Aorta (tissue), 5 donors: ENCODE measurements at regions of chr17 and their contacts with region 1.

Region 1: GRCh38 chr17:40399185-40399584 is 18.5 kb downstream of the TOP2A start:
- DNase-seq: no peak
- ATAC-seq: no peak
- H3K4me3 ChIP-seq: no peak overlapping the region
- H3K27ac ChIP-seq: no peak overlapping the region
- H3K4me1 ChIP-seq: no peaks in the 10 kb centered on the region
- H3K27me3 ChIP-seq: no peaks in the 10 kb centered on the region

Region 2: GRCh38 chr17:40209404-40210093 is 189.6 kb before region 1 on chr17:
- intact Hi-C with region 1: no loop called
- DNase-seq: no peak
- ATAC-seq: no peak
- H3K4me3 ChIP-seq: no peak overlapping the region
- H3K27ac ChIP-seq: no peak overlapping the region
- H3K4me1 ChIP-seq: no peaks in the 10 kb centered on the region
- H3K27me3 ChIP-seq: no peaks in the 10 kb centered on the region

Region 3: DNA sequence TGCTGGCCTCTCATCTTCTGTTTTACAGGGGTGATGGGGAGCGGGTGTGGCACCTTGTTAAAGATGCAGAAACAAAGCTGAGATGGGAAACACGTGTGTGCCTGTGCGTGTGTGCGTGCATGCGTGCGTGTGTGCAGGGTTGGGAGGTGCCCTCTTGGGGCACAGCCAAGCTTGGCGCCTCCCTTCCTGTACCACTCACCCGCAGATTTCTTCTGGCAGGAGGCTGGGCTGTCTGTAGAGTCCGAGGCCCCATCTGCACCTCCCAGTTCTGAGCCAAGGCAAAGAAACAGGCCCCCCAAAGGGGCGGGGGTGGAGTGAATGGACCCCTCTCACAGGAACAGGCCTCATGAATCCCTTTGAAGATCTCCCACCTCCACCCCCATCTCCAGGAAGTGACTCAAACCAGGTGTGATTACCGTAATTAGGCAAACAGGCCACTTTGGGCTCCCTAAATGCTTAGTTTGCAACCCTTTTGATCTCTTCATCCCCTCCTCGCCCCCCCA is 81.4 kb after region 1 on chr17:
- intact Hi-C with region 1: loop called in 1 of 2 experiments (anchors 10 kb)
- DNase-seq: no peak
- ATAC-seq: no peak
- H3K4me3 ChIP-seq: no peak overlapping the region
- H3K27ac ChIP-seq: no peak overlapping the region
- H3K4me1 ChIP-seq: no peaks in the 10 kb centered on the region
- H3K27me3 ChIP-seq: no peaks in the 10 kb centered on the region

Region 4: GRCh38 chr17:40531051-40531991 is 132.1 kb after region 1 on chr17:
- intact Hi-C with region 1: loop called (anchors 5 to 10 kb)
- DNase-seq: peak in 1 of 2 donors; percentile 54
- ATAC-seq: no peak
- H3K4me3 ChIP-seq: no peak overlapping the region
- H3K27ac ChIP-seq: no peak overlapping the region
- H3K4me1 ChIP-seq: no peaks in the 10 kb centered on the region
- H3K27me3 ChIP-seq: no peaks in the 10 kb centered on the region

Region 5: DNA sequence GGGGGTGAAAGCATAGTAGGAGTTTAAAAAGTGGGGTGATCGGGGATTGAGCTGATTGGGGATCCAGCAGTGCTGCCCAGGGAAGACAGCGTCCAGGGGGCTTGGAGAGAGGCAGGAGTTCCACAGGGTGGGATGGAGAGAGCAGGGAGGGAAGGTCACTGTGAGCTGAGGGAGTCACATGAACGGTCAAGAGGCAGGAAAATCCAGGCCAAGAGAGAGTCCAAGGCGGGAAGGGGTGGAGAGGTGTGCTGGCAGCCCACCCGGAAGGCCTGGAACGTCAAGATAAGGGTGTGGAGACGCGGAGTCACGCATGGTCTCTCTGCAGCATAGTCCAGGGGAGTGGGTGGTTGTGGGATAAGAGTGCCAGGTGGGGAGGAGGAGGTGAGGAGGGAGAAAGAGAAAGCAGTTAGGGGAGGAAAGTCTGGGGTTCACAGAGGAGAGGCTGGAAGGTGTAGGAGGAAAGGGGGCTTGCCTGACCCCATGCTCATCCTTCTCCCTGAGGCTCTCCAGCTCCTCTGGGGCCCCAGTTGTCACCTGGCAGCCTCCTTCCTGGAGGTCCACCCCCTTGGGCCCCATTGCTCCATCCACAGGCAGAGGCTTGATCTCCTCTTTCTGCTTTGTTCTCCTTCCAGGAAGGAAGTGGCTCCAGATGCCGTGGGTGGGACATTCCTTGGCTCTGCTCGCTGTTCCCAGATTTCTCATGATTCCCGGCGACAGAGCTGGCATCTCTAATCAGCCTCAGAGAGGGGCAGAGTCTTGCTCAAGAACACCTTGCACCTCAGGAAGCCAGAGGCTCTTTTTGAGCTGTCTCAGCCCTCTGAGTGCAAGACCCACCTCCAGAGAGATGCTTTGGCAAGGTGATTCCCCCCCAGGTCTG is 137.3 kb after region 1 on chr17:
- intact Hi-C with region 1: loop called (anchors 5 to 10 kb)
- DNase-seq: peak; percentile 61 to 83
- ATAC-seq: peak; percentile 46
- H3K4me3 ChIP-seq: no peak overlapping the region
- H3K27ac ChIP-seq: no peak overlapping the region
- H3K4me1 ChIP-seq: peaks cover 0 to 2% of the 10 kb centered on the region in 2 donors
- H3K27me3 ChIP-seq: no peaks in the 10 kb centered on the region

Region 6: DNA sequence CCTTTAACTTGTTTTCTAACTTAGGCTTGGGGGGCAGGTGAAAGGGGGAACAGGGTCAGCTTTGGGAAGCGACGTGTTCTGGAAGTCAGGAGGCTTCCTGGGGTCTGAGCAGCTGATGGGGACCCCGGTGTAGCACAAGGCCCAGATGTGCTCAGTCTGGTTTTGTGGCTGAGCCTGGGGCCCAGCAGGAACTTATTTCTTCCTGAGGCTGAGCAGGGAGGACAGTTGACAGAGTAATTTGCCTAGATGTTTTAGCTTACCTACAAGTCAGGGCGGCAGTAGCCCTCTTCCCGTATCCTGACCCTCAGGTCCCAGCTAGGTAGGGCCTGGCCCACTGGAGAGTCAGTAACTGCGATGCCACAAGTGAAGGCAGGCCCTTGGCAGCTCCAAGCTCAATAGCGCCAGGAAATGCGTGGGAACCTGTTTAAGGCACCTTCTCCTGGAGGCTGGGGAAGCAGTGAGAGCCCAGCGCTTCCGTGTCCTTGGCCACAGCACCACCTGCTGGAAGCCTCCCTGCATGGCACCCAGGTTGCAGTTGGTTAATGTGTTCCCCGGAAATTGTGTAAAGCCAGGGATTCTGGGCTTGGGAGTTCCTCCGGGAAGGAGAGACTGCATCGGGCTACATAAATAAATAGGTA is 160.9 kb after region 1 on chr17:
- intact Hi-C with region 1: loop called in 1 of 2 experiments (anchors 2 kb)
- DNase-seq: peak; percentile 90 to 95
- ATAC-seq: peak; percentile 92
- H3K4me3 ChIP-seq: no peak overlapping the region
- H3K27ac ChIP-seq: no peak overlapping the region
- H3K4me1 ChIP-seq: no peaks in the 10 kb centered on the region
- H3K27me3 ChIP-seq: no peaks in the 10 kb centered on the region